Naive thymus-derived CD4-positive, alpha-beta T cell (primary cell): ENCODE measurements at regions of chr16 and their contacts with region 1.

Region 1: DNA sequence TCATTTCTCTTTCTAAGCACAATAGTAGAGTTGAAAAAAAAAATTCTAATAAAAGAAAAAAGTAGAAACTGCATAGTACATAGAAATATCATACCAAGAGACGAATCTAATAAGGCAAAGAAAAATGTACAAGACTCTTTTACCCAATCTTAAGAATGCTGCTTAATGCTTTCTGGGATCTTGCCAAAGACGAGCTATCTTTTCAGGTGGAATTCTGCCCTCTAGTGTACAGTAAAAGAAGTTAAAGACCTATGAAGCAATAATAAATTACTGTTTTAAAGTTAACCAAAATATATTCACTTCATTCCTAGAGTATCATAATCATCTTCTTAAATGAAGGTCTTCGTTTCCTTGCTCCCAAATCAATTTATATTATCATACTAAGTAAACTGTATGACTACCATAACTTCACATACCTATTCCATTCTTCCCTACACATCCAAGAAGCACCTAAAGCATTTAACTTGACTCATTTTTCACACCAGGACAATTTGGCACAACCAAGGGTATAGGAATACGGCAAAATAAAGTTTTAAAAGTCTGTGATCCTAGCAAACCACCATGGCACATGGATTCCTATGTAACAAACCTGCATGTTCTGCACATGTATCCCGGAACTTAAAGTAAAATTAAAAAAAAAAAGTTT is 47.7 kb downstream of the CFDP1 start:
- DNase-seq: peak in 7 of 9 donors; percentile 35 to 71 (median 55)
- ATAC-seq: peak; percentile 67
- H3K4me3 ChIP-seq: no peak overlapping the region
- H3K4me3 Mint-ChIP-seq: no peak overlapping the region
- H3K27ac ChIP-seq: no peak overlapping the region
- H3K27ac Mint-ChIP-seq: peak overlapping the region in 1 of 9 donors; percentile 59
- H3K4me1 ChIP-seq: peaks cover 4 to 14% of the 10 kb centered on the region in 2 donors
- H3K4me1 Mint-ChIP-seq: peaks cover 9 to 25% (median 20%) of the 10 kb centered on the region in 7 donors
- H3K27me3 ChIP-seq: no peaks in the 10 kb centered on the region
- H3K27me3 Mint-ChIP-seq: peaks cover 0 to 17% (median 0%) of the 10 kb centered on the region in 5 donors

Region 2: GRCh38 chr16:75402821-75403475 is 17.3 kb after region 1 on chr16:
- CTCF ChIA-PET with region 1: interaction called, 5 read pairs
- POLR2A ChIA-PET with region 1: interaction called, 4 read pairs
- intact Hi-C with region 1: loop called in 1 of 2 experiments (anchors 2 kb)
- DNase-seq: peak in 5 of 9 donors; percentile 20 to 45 (median 31)
- ATAC-seq: peak; percentile 69
- H3K4me3 ChIP-seq: no peak overlapping the region
- H3K4me3 Mint-ChIP-seq: no peak overlapping the region
- H3K27ac ChIP-seq: no peak overlapping the region
- H3K27ac Mint-ChIP-seq: peak overlapping the region in 1 of 9 donors; percentile 47
- H3K4me1 ChIP-seq: no peaks in the 10 kb centered on the region
- H3K4me1 Mint-ChIP-seq: peaks cover 0 to 6% (median 0%) of the 10 kb centered on the region in 7 donors
- H3K27me3 ChIP-seq: no peaks in the 10 kb centered on the region
- H3K27me3 Mint-ChIP-seq: no peaks in the 10 kb centered on the region